Heart left ventricle (tissue), 16 donors: ENCODE measurements at regions of chr13 and their contacts with region 1.

Region 1: DNA sequence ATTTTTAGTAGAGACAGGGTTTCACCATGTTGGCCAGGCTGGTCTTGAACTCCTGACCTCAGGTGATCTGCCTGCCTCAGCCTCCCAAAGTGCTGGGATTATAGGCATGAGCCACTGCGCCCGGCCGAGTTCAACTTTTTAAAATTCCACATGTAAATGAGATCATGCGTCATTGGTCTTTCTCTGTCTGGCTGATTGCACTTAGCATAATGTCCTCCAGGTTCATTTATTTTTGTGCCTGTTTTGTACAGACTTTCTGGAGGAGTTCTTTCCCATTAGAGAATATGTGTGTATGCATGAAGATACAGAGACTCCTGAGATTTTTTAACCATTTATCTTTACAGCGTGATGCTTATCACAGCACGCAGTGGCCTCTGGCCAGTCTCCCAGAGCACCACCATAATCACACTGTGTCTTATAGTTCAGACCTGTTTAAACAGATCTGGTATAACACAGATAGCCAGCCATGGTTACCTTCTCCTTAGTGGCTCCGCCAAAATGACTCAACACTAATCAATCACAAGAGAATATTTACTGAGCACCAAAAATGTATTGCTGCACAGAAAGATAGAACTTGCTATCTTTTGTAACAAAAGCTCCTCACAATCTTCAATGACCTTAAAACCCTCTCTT is 11.4 kb upstream of the STARD13 start:
- DNase-seq: no peak
- ATAC-seq: no peak
- H3K4me3 ChIP-seq: no peak overlapping the region
- H3K27ac ChIP-seq: no peak overlapping the region
- H3K4me1 ChIP-seq: peaks cover 0 to 8% (median 0%) of the 10 kb centered on the region in 12 donors
- H3K27me3 ChIP-seq: no peaks in the 10 kb centered on the region
- CTCF ChIP-seq: no peak
- POLR2A ChIP-seq: no peak

Region 2: GRCh38 chr13:33251131-33251661 is 45.7 kb before region 1 on chr13:
- intact Hi-C with region 1: no loop called
- DNase-seq: peak in 3 of 5 donors; percentile 37 to 51 (median 45)
- ATAC-seq: peak in 3 of 4 donors; percentile 38 to 72 (median 57)
- H3K4me3 ChIP-seq: no peak overlapping the region
- H3K27ac ChIP-seq: peak overlapping the region; percentile 66 to 92 (median 80)
- H3K4me1 ChIP-seq: peaks cover 8 to 80% (median 46%) of the 10 kb centered on the region in 12 donors
- H3K27me3 ChIP-seq: no peaks in the 10 kb centered on the region
- CTCF ChIP-seq: no peak
- POLR2A ChIP-seq: no peak

Region 3: GRCh38 chr13:33330483-33330882 is 33.6 kb after region 1 on chr13:
- intact Hi-C with region 1: loop called in 1 of 10 experiments (anchors 5 kb)
- DNase-seq: no peak
- ATAC-seq: no peak
- H3K4me3 ChIP-seq: no peak overlapping the region
- H3K27ac ChIP-seq: no peak overlapping the region
- H3K4me1 ChIP-seq: no peaks in the 10 kb centered on the region
- H3K27me3 ChIP-seq: no peaks in the 10 kb centered on the region
- CTCF ChIP-seq: no peak
- POLR2A ChIP-seq: no peak